Gastrocnemius medialis (tissue), 4 donors: ENCODE measurements at regions of chrX and their contacts with region 1.

Region 1: GRCh38 chrX:48801280-48802088 is at the start of gene HDAC6:
- DNase-seq: peak; percentile 93 to 98
- ATAC-seq: peak; percentile 85 to 87
- H3K4me3 ChIP-seq: peak within 1 kb of the TSS; percentile 65 to 74 (median 72)
- H3K27ac ChIP-seq: peak within 1 kb of the TSS; percentile 90 to 99 (median 96)
- H3K4me1 ChIP-seq: peaks cover 5 to 6% of the 10 kb centered on the region in 2 donors
- H3K27me3 ChIP-seq: no peaks in the 10 kb centered on the region
- CTCF ChIP-seq: no peak
- POLR2A ChIP-seq: peak in 1 of 2 donors; percentile 6
- total RNA-seq, gene HDAC6: 38.2 to 92.2 (median 61.3) TPM

Region 2: DNA sequence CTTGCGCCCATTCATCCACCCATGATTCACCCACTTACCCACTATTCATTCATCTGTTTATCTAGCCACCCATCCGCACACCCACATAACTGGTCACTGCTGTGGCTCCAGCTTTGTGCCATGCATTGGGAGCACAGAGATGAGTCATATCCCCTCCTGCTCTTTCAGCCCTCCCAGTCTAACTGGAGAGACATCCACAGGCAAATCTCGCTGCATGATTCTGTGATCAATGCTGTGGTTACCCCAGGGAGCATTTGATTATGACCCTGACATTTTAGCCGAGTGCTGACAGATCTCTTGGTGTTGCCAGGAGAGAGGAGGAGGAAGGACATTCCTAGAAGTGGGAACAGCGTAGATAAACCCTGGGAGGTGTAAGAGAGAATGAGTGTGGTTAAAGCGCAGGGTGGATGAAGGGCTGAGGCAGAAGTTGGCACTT is 303.1 kb before region 1 on chrX:
- in situ Hi-C with region 1: no loop called
- intact Hi-C with region 1: no loop called
- DNase-seq: no peak
- ATAC-seq: no peak
- H3K4me3 ChIP-seq: no peak overlapping the region
- H3K27ac ChIP-seq: no peak overlapping the region
- H3K4me1 ChIP-seq: no peaks in the 10 kb centered on the region
- H3K27me3 ChIP-seq: no peaks in the 10 kb centered on the region
- CTCF ChIP-seq: no peak
- POLR2A ChIP-seq: no peak

Region 3: GRCh38 chrX:48539345-48540027 is 262.0 kb before region 1 on chrX and contains the start of gene TBC1D25:
- in situ Hi-C with region 1: no loop called
- intact Hi-C with region 1: loop called (anchors 10 kb)
- DNase-seq: peak; percentile 95 to 98
- ATAC-seq: peak; percentile 94 to 97
- H3K4me3 ChIP-seq: peak within 1 kb of the TSS; percentile 70 to 82 (median 78)
- H3K27ac ChIP-seq: peak within 1 kb of the TSS; percentile 91 to 96 (median 92)
- H3K4me1 ChIP-seq: peaks cover 0 to 3% of the 10 kb centered on the region in 2 donors
- H3K27me3 ChIP-seq: no peaks in the 10 kb centered on the region
- CTCF ChIP-seq: peak; percentile 8 to 41 (median 30)
- POLR2A ChIP-seq: peak; percentile 66 to 75
- total RNA-seq, gene TBC1D25: 10.3 to 14.8 (median 11.9) TPM

Region 4: GRCh38 chrX:48665991-48666390 is 135.5 kb before region 1 on chrX:
- in situ Hi-C with region 1: loop called in 1 of 4 experiments (anchors 25 kb)
- intact Hi-C with region 1: no loop called
- DNase-seq: no peak
- ATAC-seq: no peak
- H3K4me3 ChIP-seq: no peak overlapping the region
- H3K27ac ChIP-seq: no peak overlapping the region
- H3K4me1 ChIP-seq: no peaks in the 10 kb centered on the region
- H3K27me3 ChIP-seq: no peaks in the 10 kb centered on the region
- CTCF ChIP-seq: no peak
- POLR2A ChIP-seq: no peak

Region 5: DNA sequence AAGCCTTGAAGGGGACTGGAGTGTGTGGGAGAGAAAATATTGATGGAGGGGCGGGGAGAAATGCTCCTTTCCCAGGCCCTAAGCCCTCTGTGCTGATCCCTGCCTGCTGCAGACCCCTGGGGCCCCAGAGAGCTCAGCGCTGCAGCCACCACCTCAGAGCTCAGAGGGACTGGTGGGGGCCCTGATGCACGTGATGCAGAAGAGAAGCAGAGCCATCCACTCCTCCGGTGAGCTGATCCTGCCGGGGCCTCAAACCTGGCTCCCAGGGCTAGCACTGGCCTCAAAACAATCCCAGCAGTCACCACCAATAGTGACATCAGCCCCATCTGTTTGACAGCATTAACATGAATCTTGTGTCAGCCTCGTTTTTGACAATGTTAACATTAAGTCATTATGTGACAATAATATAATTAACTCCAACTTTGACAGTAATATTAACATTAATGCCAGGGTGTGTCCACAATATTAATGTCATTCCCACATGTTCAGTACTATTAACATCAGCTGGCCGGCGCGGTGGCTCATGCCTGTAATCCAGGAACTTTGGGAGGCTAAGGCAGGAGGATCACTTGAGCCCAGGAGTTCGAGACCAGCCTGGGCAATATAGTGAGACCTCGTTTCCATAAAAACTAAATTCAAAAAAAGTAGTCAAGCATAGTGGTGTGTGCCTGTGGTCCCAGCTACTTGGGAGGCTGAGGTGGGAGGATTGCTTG is 112.1 kb before region 1 on chrX:
- in situ Hi-C with region 1: no loop called
- intact Hi-C with region 1: no loop called
- DNase-seq: no peak
- ATAC-seq: no peak
- H3K4me3 ChIP-seq: no peak overlapping the region
- H3K27ac ChIP-seq: no peak overlapping the region
- H3K4me1 ChIP-seq: no peaks in the 10 kb centered on the region
- H3K27me3 ChIP-seq: peaks cover 0 to 3% (median 0%) of the 10 kb centered on the region in 3 donors
- CTCF ChIP-seq: no peak
- POLR2A ChIP-seq: no peak

Region 6: GRCh38 chrX:48737213-48737938 is 64.1 kb before region 1 on chrX:
- in situ Hi-C with region 1: loop called in 1 of 4 experiments (anchors 10 kb)
- intact Hi-C with region 1: loop called (anchors 1 kb)
- DNase-seq: peak; percentile 89 to 93
- ATAC-seq: peak; percentile 100
- H3K4me3 ChIP-seq: peak overlapping the region; percentile 66 to 73 (median 70)
- H3K27ac ChIP-seq: peak overlapping the region; percentile 81 to 94 (median 91)
- H3K4me1 ChIP-seq: peaks cover 5 to 7% of the 10 kb centered on the region in 2 donors
- H3K27me3 ChIP-seq: no peaks in the 10 kb centered on the region
- CTCF ChIP-seq: no peak
- POLR2A ChIP-seq: peak in 1 of 2 donors; percentile 51

Region 7: DNA sequence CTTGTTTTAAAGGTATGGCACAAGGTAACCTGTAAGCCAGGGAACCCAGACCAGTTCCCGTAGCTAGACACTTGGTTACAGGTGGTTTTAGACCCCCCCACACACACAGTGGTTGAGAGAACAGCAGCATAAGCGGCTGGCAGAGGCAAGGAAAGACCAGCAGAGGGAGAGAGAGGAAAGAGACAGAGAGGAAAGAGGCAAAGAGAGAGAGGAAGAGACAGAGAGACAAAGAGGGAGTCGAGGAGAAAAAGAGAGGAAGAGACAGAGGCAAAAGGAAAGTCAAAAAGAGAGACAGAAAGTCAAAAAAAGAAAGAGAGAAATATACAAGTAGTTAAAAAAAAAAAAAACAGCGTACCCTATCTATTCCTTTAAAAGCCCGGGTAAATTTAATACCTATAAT is 53.4 kb after region 1 on chrX:
- in situ Hi-C with region 1: no loop called
- intact Hi-C with region 1: no loop called
- DNase-seq: no peak
- ATAC-seq: no peak
- H3K4me3 ChIP-seq: no peak overlapping the region
- H3K27ac ChIP-seq: no peak overlapping the region
- H3K4me1 ChIP-seq: no peaks in the 10 kb centered on the region
- H3K27me3 ChIP-seq: peaks cover 0 to 5% (median 0%) of the 10 kb centered on the region in 3 donors
- CTCF ChIP-seq: no peak
- POLR2A ChIP-seq: no peak

Region 8: GRCh38 chrX:48957827-48958634 is 156.5 kb after region 1 on chrX:
- in situ Hi-C with region 1: no loop called
- intact Hi-C with region 1: loop called (anchors 5 kb)
- DNase-seq: peak; percentile 95 to 98
- ATAC-seq: peak; percentile 86
- H3K4me3 ChIP-seq: peak overlapping the region; percentile 59 to 75 (median 66)
- H3K27ac ChIP-seq: peak overlapping the region; percentile 86 to 95 (median 94)
- H3K4me1 ChIP-seq: peaks cover 9 to 15% of the 10 kb centered on the region in 2 donors
- H3K27me3 ChIP-seq: no peaks in the 10 kb centered on the region
- CTCF ChIP-seq: no peak
- POLR2A ChIP-seq: peak; percentile 50 to 64

Region 9: DNA sequence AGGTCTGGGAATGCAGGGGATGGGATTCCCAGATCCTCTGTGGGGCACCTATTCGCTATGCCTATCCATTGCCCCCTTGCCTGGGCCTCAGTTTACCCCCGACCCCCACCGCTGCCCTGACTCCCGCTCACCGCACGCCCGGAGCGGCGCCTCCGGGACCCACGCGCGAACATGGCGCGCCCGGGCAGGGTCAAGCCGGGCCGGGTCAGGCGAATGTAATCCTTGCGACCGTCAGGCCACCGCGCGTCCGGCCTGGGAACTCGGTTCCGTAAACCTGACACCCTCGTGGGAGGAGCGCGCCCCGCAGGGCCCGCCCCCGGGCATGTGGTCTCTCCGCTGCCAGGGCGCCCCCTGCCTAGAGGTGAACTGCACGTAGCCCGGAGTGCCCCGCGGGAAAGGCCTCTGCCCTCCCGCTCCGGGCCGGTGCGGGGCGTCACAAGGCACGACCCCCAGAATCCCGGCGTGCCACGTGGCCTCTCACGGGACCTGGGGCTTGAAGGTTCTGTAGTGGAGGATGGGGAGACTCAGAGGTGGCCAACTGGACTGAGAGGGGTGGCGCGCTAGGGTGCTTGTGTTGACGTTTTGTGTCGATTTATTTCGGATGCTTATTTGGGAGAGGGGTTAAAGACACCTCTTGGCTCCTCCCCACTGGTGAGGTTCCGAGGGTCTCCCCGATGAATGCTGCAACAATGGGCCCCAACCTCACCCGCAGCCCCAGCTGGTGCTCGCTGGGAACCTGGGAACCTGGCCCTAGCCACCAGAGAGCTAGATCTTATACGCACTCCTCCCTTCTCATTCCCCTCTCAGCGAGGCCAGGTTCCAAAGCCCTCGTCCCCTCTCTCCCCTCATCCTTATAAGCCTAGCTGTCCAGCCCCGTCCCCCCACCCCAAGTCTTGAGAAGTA is 384.9 kb after region 1 on chrX and contains the start of gene PRICKLE3:
- in situ Hi-C with region 1: no loop called
- intact Hi-C with region 1: loop called (anchors 5 kb)
- DNase-seq: peak; percentile 78 to 86
- ATAC-seq: peak; percentile 23 to 32
- H3K4me3 ChIP-seq: peak within 1 kb of the TSS; percentile 51 to 69 (median 61)
- H3K27ac ChIP-seq: peak within 1 kb of the TSS; percentile 83 to 93 (median 92)
- H3K4me1 ChIP-seq: peaks cover 8 to 12% of the 10 kb centered on the region in 2 donors
- H3K27me3 ChIP-seq: no peaks in the 10 kb centered on the region
- CTCF ChIP-seq: peak in 3 of 5 experiments; percentile 29 to 51 (median 38)
- POLR2A ChIP-seq: peak; percentile 80 to 82
- total RNA-seq, gene PRICKLE3: 9.1 to 33.1 (median 21.3) TPM